K562 (cell line): ENCODE measurements at regions of chr11 and their contacts with region 1.

Region 1: DNA sequence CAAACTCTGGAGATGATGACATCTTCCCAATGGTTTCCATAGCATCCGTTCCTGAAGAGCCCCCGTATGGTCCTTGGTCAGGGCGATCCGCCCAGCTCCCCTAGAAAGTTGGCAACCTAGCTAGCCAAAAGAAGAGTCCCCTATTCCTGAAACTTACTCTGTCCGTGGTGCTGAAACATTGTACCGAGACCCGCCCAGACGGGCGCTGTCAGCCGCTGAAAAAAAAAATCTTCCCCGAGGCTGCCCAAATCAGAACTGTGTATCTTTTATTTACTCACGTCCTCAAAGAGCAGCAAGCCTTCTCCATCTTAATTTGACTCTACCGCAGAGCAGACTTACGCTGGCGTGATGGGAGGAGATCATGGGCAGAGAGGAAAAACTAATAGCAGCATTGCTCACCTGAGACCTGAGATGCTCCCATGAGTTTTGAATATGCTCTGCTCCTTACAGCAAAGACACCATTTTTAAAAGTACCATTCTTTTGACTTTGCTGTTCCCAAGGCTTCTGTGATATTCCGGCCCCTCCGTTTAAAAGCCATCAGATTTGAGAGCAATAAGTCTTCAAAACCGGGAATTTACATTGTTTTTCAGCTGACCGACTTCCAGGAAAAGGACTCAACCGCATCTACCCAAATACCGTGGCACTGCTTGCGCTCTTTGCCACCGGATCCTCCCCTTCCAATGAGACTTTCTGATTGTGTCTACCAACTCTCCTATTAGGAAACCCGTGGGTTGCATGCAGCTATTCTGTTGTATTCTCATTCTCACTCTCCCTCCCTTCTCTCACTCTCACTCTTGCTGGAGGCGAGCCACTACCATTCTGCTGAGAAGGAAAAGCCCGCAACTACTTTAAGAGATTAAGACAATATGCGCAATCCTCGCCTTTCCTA is at the start of gene SLC17A6:
- DNase-seq: peak in 2 of 4 experiments; percentile 10 to 44
- ATAC-seq: peak; percentile 41; the same call in 2 of the 3 replicates
- H3K4me3 ChIP-seq: no peak within 1 kb of the TSS
- H3K27ac ChIP-seq: no peak within 1 kb of the TSS
- H3K4me1 ChIP-seq: 0 out of 5 replicates have a peak, but pooled peaks cover 0 to 5% of the 10 kb centered on the region in 2 experiments
- H3K27me3 ChIP-seq: peaks cover 0 to 23% of the 10 kb centered on the region in 2 experiments; a peak in 2 of 5 replicates
- CTCF ChIP-seq: no peak
- EP300 ChIP-seq: no peak
- POLR2A ChIP-seq: no peak
- RAD21 ChIP-seq: no peak
- polyA plus RNA-seq, gene SLC17A6: not detected

Region 2: DNA sequence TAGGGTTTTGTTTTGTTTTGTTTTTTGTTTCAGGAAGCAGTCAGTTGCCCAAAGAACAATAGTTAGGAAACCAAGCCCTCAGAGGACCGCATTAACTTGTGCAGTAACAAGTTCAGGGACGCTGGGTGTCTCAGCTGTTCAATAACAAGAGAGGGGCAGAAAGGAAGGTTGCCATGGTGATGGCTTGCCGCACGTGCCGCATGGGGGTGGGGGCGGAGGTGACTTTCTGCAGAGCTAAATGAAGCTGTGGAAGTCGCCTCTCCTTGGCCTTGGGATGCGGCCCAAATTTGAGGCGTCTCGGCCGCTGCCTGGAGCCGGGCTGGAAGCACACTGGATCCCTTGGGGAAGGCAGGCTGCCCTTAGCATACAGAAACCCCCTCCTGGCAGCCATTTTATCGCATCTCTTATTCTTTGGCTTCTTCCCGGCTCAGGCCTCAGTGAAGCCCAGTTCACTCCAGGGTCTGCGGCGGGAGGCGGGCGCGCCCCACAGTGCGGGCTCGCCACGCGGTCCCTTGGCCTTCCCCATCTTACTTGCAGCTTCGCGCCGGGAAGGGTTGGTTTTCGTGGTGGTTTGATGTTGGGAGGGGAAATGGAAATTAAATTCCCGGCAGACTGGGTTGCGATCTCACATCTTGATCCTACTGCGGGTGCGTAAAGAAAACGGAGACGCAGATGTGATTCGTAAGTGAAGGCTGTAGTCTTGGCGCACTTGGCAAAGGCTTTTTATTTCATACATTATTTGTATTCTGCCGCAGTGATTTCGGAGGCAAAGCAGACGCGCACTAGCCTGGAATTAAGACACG is 94.7 kb after region 1 on chr11:
- CTCF ChIA-PET with region 1: no interaction called
- POLR2A ChIA-PET with region 1: no interaction called
- in situ Hi-C with region 1: no loop called
- intact Hi-C with region 1: no loop called
- DNase-seq: peak in 1 of 4 experiments; percentile 2
- ATAC-seq: no peak
- H3K4me3 ChIP-seq: no peak overlapping the region
- H3K27ac ChIP-seq: no peak overlapping the region
- H3K4me1 ChIP-seq: peaks cover 0 to 4% of the 10 kb centered on the region in 2 experiments; a peak in 1 of 5 replicates
- H3K27me3 ChIP-seq: no peaks in the 10 kb centered on the region
- CTCF ChIP-seq: no peak
- EP300 ChIP-seq: no peak
- POLR2A ChIP-seq: no peak
- RAD21 ChIP-seq: no peak

Region 3: GRCh38 chr11:22539821-22540256 is 202.0 kb after region 1 on chr11:
- CTCF ChIA-PET with region 1: no interaction called
- POLR2A ChIA-PET with region 1: no interaction called
- in situ Hi-C with region 1: no loop called
- intact Hi-C with region 1: loop called (anchors 10 kb)
- DNase-seq: no peak
- ATAC-seq: peak; percentile 48; the same call in 1 of the 3 replicates
- H3K4me3 ChIP-seq: no peak overlapping the region
- H3K27ac ChIP-seq: no peak overlapping the region
- H3K4me1 ChIP-seq: no peaks in the 10 kb centered on the region
- H3K27me3 ChIP-seq: no peaks in the 10 kb centered on the region
- CTCF ChIP-seq: peak in 1 of 3 experiments; percentile 23; a peak in 1 of 6 replicates
- EP300 ChIP-seq: no peak
- POLR2A ChIP-seq: no peak
- RAD21 ChIP-seq: peak in 1 of 2 experiments; percentile 41; a peak in 2 of 4 replicates

Region 4: GRCh38 chr11:22558664-22559063 is 220.8 kb after region 1 on chr11:
- CTCF ChIA-PET with region 1: no interaction called
- POLR2A ChIA-PET with region 1: no interaction called
- in situ Hi-C with region 1: no loop called
- intact Hi-C with region 1: no loop called
- DNase-seq: peak in 1 of 4 experiments; percentile 3
- ATAC-seq: no peak
- H3K4me3 ChIP-seq: no peak overlapping the region
- H3K27ac ChIP-seq: no peak overlapping the region
- H3K4me1 ChIP-seq: no peaks in the 10 kb centered on the region
- H3K27me3 ChIP-seq: no peaks in the 10 kb centered on the region
- CTCF ChIP-seq: no peak
- EP300 ChIP-seq: no peak
- POLR2A ChIP-seq: no peak
- RAD21 ChIP-seq: no peak